Sciatic nerve (tissue), 2 donors: ENCODE measurements at regions of chr18 and their contacts with region 1.

Region 1: DNA sequence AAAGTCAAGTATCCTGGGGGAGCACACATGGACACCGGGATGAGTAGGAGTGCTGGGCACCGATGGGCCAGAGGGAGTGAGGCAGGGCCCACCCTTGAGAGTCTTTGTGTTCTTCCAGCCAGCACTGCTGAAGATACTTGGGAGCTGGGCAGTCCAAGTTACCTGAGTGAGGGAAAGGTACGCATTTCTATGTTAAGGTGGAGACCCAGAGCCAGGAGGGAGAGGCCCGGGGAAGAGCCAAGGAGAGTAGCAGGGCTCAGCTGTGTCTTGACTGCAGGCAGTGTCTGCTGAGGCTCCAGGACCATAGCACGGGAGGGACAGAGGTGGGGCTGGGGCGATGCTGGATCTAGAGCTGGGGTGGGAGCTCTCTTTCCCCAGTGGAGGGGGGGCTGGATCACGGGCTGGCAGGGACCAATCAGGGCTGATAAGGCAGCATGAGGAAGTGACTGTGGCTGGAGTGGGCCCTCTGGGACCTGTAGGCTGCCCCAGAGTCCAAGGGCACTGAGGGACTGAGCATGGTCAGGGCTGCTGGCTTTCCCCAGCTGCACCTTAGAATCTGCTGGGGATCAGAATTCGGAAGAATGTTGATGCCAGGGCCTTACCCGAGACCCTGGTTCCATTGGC is 289.2 kb downstream of the PHLPP1 start:
- DNase-seq: no peak
- ATAC-seq: no peak

Region 2: GRCh38 chr18:62790871-62791772 is 213.5 kb before region 1 on chr18:
- intact Hi-C with region 1: no loop called
- DNase-seq: no peak
- ATAC-seq: peak; percentile 68

Region 3: DNA sequence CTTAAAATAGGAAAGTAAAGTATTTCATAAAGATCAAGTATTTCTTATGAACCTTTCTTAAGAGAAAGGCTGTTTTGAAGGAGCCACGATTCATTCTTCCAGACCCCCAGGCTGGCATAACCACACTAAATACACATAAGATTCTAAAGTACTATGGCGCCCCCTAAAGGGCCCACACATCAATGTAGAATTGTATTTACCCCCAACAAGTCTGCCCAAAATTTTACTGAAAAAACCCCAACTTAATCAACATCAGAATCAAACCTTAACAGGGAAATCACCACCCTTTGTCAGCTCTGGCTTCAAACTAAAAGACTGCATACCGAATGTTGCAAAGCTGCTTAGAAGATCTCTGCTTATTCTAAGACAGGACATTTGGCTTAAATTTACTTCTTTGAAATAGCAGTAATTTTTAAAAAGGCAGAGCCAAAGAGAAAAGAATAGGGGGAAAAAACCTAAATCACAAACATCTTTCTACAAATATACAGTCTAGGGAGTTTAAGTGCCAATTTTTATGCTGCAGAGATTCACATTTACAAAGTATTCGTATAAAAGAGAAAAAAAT is 335.4 kb after region 1 on chr18:
- intact Hi-C with region 1: loop called (anchors 10 kb)
- DNase-seq: no peak
- ATAC-seq: no peak